Activated CD8-positive, alpha-beta T cell treated with anti-CD3 and anti-CD28 coated beads for 36 hours (primary cell): ENCODE measurements at regions of chr16 and their contacts with region 1.

Region 1: DNA sequence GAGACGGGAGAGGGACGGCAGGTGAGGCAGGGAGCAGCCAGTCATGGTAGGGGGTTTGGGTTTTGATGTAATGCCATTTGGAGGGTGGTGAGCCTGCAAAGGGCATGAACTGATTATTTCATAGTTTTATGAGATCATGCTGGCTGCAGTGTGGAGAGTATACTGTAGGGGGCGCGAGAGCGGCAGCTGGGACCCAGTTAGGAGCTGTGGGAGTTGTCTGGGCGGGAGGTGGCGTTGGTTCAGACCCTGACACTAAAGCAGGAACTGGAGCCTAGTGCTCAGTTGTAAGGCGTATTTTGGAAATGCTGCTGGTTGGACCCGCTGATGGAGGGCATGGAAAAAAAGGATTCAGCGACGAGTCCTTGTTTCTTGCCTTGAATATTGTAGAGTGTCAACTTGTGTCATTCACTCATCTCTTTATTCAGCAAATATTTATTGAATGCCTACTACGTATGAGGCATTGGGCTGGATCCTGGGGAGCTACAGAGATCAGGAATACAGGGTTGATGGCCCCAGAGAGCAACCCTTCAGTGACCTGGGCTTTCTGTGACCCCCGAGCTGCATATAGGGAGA is 23.7 kb upstream of the KDM8 start:
- DNase-seq: peak; percentile 97
- ATAC-seq: peak; percentile 98
- H3K4me3 Mint-ChIP-seq: no peak overlapping the region
- H3K27ac Mint-ChIP-seq: peak overlapping the region; percentile 43
- H3K4me1 Mint-ChIP-seq: peaks cover 44% of the 10 kb centered on the region
- H3K27me3 Mint-ChIP-seq: no peaks in the 10 kb centered on the region
- CTCF ChIP-seq: peak; percentile 98

Region 2: DNA sequence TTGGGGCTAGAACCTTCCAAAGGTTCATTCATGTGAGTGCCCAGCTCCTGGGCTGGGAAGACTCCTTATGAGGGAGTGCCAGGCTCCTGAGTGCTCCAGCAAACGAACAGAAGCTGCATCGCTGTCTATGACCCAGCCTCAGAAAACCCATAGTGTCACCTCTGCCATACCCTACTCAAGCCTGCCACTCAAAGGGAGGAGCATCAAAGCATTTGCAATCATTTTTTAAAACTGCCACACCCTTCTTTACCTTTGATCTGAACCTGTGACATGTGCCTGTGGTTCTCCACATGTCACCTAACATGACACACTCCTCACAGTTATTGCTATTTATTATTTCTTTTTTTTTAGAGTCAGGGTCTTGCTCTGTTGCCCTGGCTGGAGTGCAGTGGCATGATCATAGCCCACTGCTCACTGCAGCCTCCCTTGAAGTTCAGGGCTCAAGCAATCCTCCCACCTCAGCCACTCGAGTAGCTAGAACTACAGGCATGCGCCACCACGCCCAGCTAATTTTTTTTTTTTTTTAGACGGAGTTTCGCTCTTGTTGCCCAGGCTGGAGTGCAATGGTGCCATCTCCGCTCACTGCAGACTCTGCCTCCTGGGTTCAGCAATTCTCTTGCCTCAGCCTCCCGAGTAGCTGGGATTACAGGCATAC is 16.5 kb after region 1 on chr16:
- CTCF ChIA-PET with region 1: interaction called, 29 read pairs
- POLR2A ChIA-PET with region 1: interaction called, 4 read pairs
- intact Hi-C with region 1: no loop called
- DNase-seq: peak; percentile 22
- ATAC-seq: peak; percentile 66
- H3K4me3 Mint-ChIP-seq: no peak overlapping the region
- H3K27ac Mint-ChIP-seq: no peak overlapping the region
- H3K4me1 Mint-ChIP-seq: peaks cover 61% of the 10 kb centered on the region
- H3K27me3 Mint-ChIP-seq: no peaks in the 10 kb centered on the region
- CTCF ChIP-seq: no peak

Region 3: GRCh38 chr16:27208796-27209195 is 29.2 kb after region 1 on chr16:
- CTCF ChIA-PET with region 1: interaction called, 22 read pairs
- POLR2A ChIA-PET with region 1: interaction called, 3 read pairs
- intact Hi-C with region 1: no loop called
- DNase-seq: no peak
- ATAC-seq: no peak
- H3K4me3 Mint-ChIP-seq: no peak overlapping the region
- H3K27ac Mint-ChIP-seq: no peak overlapping the region
- H3K4me1 Mint-ChIP-seq: peaks cover 16% of the 10 kb centered on the region
- H3K27me3 Mint-ChIP-seq: no peaks in the 10 kb centered on the region
- CTCF ChIP-seq: no peak

Region 4: GRCh38 chr16:27408012-27408601 is 228.5 kb after region 1 on chr16:
- CTCF ChIA-PET with region 1: interaction called, 10 read pairs
- POLR2A ChIA-PET with region 1: interaction called, 6 read pairs
- intact Hi-C with region 1: no loop called
- DNase-seq: peak; percentile 86
- ATAC-seq: peak; percentile 72
- H3K4me3 Mint-ChIP-seq: peak overlapping the region; percentile 99
- H3K27ac Mint-ChIP-seq: peak overlapping the region; percentile 96
- H3K4me1 Mint-ChIP-seq: peaks cover 65% of the 10 kb centered on the region
- H3K27me3 Mint-ChIP-seq: no peaks in the 10 kb centered on the region
- CTCF ChIP-seq: no peak